Activated CD4-positive, alpha-beta memory T cell treated with anti-CD3 and anti-CD28 coated beads for 36 hours (primary cell): ENCODE measurements at regions of chr14 and their contacts with region 1.

Region 1: DNA sequence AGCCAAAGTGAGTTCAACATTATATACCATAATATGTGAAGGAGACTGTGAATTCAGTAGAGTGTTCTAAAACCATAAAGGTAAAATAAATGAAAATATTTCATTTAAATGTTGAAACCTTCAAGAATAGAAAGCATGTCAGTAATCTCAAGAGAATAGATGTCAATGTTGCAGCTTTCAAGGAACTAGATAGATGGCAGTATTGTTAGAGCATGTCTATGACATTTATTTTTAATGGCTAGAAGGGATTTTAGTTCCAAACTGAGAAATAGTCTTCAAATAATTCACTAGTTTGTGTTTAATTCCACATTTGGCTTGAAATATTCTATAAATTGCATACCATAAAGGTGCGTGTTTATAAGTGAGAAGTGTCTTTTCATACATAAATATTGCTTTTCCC is 326.5 kb downstream of the FLRT2 start:
- DNase-seq: no peak
- H3K4me3 Mint-ChIP-seq: no peak overlapping the region
- H3K27ac Mint-ChIP-seq: no peak overlapping the region
- H3K4me1 Mint-ChIP-seq: no peaks in the 10 kb centered on the region
- H3K27me3 Mint-ChIP-seq: peaks cover 1% of the 10 kb centered on the region

Region 2: DNA sequence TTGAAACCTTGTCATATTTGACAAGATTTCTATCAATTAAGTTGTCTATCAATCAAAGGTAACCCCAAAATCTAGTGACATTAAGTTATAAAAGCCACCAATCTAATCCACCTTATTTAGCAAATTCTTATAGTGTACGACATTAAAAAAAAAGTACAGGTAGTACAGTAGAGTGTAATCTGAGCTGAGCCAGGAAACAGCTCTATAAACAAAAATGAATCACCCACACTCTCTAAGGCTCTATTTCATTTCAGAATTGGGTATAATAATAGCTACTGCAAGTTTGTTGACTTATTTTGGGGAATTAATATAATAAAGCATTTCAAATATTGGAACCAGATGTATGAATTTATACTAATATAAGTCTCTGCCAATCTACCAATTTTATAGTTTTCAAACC is 668.9 kb before region 1 on chr14:
- CTCF ChIA-PET with region 1: no interaction called
- POLR2A ChIA-PET with region 1: no interaction called
- intact Hi-C with region 1: no loop called
- DNase-seq: no peak
- H3K4me3 Mint-ChIP-seq: no peak overlapping the region
- H3K27ac Mint-ChIP-seq: no peak overlapping the region
- H3K4me1 Mint-ChIP-seq: no peaks in the 10 kb centered on the region
- H3K27me3 Mint-ChIP-seq: no peaks in the 10 kb centered on the region

Region 3: GRCh38 chr14:85358136-85358785 is 498.2 kb before region 1 on chr14:
- CTCF ChIA-PET with region 1: no interaction called
- POLR2A ChIA-PET with region 1: no interaction called
- intact Hi-C with region 1: no loop called
- DNase-seq: no peak
- H3K4me3 Mint-ChIP-seq: no peak overlapping the region
- H3K27ac Mint-ChIP-seq: no peak overlapping the region
- H3K4me1 Mint-ChIP-seq: no peaks in the 10 kb centered on the region
- H3K27me3 Mint-ChIP-seq: no peaks in the 10 kb centered on the region

Region 4: GRCh38 chr14:86038387-86039042 is 182.1 kb after region 1 on chr14:
- CTCF ChIA-PET with region 1: no interaction called
- POLR2A ChIA-PET with region 1: no interaction called
- intact Hi-C with region 1: loop called (anchors 10 kb)
- DNase-seq: peak; percentile 49
- H3K4me3 Mint-ChIP-seq: no peak overlapping the region
- H3K27ac Mint-ChIP-seq: no peak overlapping the region
- H3K4me1 Mint-ChIP-seq: no peaks in the 10 kb centered on the region
- H3K27me3 Mint-ChIP-seq: no peaks in the 10 kb centered on the region